Transverse colon (tissue), 4 donors: ENCODE measurements at regions of chrX and their contacts with region 1.

Region 1: GRCh38 chrX:5936438-5936837 is 292.2 kb downstream of the NLGN4X start:
- DNase-seq: no peak
- H3K4me3 ChIP-seq: no peak overlapping the region
- H3K27ac ChIP-seq: peak overlapping the region in 1 of 4 donors; percentile 52
- H3K4me1 ChIP-seq: no peaks in the 10 kb centered on the region
- H3K27me3 ChIP-seq: no peaks in the 10 kb centered on the region
- CTCF ChIP-seq: no peak
- EP300 ChIP-seq: no peak
- POLR2A ChIP-seq: no peak

Region 2: DNA sequence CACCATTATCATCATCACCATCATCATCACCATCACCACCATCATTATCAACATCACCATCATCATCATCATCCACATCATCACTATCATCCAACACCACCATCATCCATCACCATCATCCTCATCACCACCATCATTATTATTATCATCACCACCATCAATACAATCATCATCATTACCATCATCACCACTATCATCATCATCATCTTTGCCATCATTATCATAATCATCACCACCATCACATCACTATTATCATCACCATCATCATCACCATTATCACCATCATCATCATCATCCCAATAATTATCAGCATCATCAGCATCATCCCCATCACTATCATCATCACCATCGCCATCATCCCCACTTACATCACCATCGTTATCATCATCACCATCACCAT is 1201.2 kb before region 1 on chrX:
- in situ Hi-C with region 1: no loop called
- intact Hi-C with region 1: no loop called
- DNase-seq: no peak
- H3K4me3 ChIP-seq: no peak overlapping the region
- H3K27ac ChIP-seq: no peak overlapping the region
- H3K4me1 ChIP-seq: no peaks in the 10 kb centered on the region
- H3K27me3 ChIP-seq: no peaks in the 10 kb centered on the region
- CTCF ChIP-seq: no peak
- EP300 ChIP-seq: no peak
- POLR2A ChIP-seq: no peak

Region 3: DNA sequence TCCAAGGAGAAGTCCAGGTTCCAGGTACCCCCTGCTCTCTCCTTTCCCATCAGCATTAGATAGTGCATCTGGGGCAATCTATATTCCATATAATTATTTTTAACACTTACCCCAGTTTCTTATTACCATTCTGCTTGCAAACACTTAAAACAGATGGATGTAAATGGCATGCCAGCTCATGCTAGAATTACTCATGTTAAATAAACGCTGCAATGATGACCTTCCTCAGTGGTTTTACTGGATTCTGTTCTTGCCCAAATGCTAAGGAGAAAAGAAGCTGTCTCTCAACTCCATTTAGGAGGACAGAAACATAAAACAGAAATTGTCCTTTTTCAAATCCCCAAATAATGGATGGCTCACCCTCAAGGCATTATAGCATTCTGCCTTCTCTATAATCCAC is 131.2 kb after region 1 on chrX:
- in situ Hi-C with region 1: no loop called
- intact Hi-C with region 1: no loop called
- DNase-seq: no peak
- H3K4me3 ChIP-seq: no peak overlapping the region
- H3K27ac ChIP-seq: no peak overlapping the region
- H3K4me1 ChIP-seq: no peaks in the 10 kb centered on the region
- H3K27me3 ChIP-seq: no peaks in the 10 kb centered on the region
- CTCF ChIP-seq: no peak
- EP300 ChIP-seq: no peak
- POLR2A ChIP-seq: no peak

Region 4: GRCh38 chrX:6120329-6120728 is 183.9 kb after region 1 on chrX:
- in situ Hi-C with region 1: no loop called
- intact Hi-C with region 1: loop called (anchors 5 kb)
- DNase-seq: no peak
- H3K4me3 ChIP-seq: no peak overlapping the region
- H3K27ac ChIP-seq: no peak overlapping the region
- H3K4me1 ChIP-seq: no peaks in the 10 kb centered on the region
- H3K27me3 ChIP-seq: no peaks in the 10 kb centered on the region
- CTCF ChIP-seq: no peak
- EP300 ChIP-seq: no peak
- POLR2A ChIP-seq: no peak